Activated CD4-positive, alpha-beta memory T cell treated with anti-CD3 and anti-CD28 coated beads for 36 hours (primary cell): ENCODE measurements at regions of chr19 and their contacts with region 1.

Region 1: GRCh38 chr19:31110331-31110730 is 238.9 kb downstream of the TSHZ3 start:
- DNase-seq: peak; percentile 30
- H3K4me3 Mint-ChIP-seq: no peak overlapping the region
- H3K27ac Mint-ChIP-seq: no peak overlapping the region
- H3K4me1 Mint-ChIP-seq: peaks cover 13% of the 10 kb centered on the region
- H3K27me3 Mint-ChIP-seq: peaks cover 24% of the 10 kb centered on the region

Region 2: GRCh38 chr19:31127134-31127967 is 17.0 kb after region 1 on chr19:
- CTCF ChIA-PET with region 1: no interaction called
- POLR2A ChIA-PET with region 1: no interaction called
- intact Hi-C with region 1: no loop called
- DNase-seq: no peak
- H3K4me3 Mint-ChIP-seq: no peak overlapping the region
- H3K27ac Mint-ChIP-seq: no peak overlapping the region
- H3K4me1 Mint-ChIP-seq: no peaks in the 10 kb centered on the region
- H3K27me3 Mint-ChIP-seq: peaks cover 4% of the 10 kb centered on the region

Region 3: GRCh38 chr19:31262725-31263191 is 152.4 kb after region 1 on chr19:
- CTCF ChIA-PET with region 1: no interaction called
- POLR2A ChIA-PET with region 1: no interaction called
- intact Hi-C with region 1: loop called (anchors 10 kb)
- DNase-seq: no peak
- H3K4me3 Mint-ChIP-seq: no peak overlapping the region
- H3K27ac Mint-ChIP-seq: no peak overlapping the region
- H3K4me1 Mint-ChIP-seq: peaks cover 5% of the 10 kb centered on the region
- H3K27me3 Mint-ChIP-seq: peaks cover 13% of the 10 kb centered on the region